Activated CD4-positive, alpha-beta T cell treated with anti-CD3 and anti-CD28 coated beads for 36 hours (primary cell): ENCODE measurements at regions of chr16 and their contacts with region 1.

Region 1: GRCh38 chr16:68022704-68023522 is at the starts of genes DDX28 and DUS2:
- DNase-seq: peak; percentile 95
- ATAC-seq: peak; percentile 89
- H3K4me3 Mint-ChIP-seq: peak within 1 kb of the TSS; percentile 95
- H3K27ac Mint-ChIP-seq: peak within 1 kb of the TSS; percentile 97
- H3K4me1 Mint-ChIP-seq: peaks cover 23% of the 10 kb centered on the region
- H3K27me3 Mint-ChIP-seq: no peaks in the 10 kb centered on the region
- total RNA-seq, gene DDX28: 13.7 to 17.1 TPM
- total RNA-seq, gene DUS2: 29.5 to 33.1 TPM

Region 2: DNA sequence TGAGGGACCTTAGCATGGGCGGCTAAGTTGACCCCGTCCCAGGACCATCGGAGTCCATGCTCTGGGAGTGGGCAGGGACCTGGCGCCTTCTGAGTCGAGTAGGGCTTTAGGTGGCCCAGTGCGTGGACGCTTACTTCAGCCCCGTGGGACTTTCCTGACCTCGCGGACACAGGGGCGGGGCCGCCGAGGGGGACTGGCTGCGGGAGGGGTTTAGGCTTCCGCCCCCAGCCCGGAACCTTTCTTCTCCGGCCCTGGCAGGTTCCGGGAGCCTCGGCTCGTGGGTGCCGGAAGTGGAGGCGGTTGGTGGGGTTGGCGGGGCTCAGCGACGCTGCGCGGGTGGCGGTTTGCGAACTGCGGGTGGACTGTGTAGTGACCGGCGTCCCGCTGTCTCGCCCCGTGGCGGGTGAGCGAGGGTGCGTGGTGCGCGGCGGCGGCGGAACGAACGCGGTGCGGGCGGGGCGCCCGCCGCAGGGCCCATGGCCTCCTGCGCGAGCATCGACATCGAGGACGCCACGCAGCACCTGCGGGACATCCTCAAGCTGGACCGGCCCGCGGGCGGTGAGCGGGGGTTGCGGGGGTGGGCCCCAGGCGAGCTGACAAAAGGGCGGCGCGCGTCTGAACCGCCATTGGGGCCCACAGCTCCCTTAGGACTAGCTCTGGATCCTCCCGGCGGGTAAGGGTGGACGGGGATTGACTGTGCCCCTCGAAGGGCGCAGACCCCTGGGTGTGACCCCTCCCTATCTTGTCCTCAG is 150.0 kb before region 1 on chr16 and contains the start of gene EDC4:
- CTCF ChIA-PET with region 1: no interaction called
- POLR2A ChIA-PET with region 1: no interaction called
- intact Hi-C with region 1: loop called in 1 of 2 experiments (anchors 1 kb)
- DNase-seq: peak; percentile 92
- ATAC-seq: peak; percentile 89
- H3K4me3 Mint-ChIP-seq: peak within 1 kb of the TSS; percentile 77
- H3K27ac Mint-ChIP-seq: peak within 1 kb of the TSS; percentile 92
- H3K4me1 Mint-ChIP-seq: peaks cover 30% of the 10 kb centered on the region
- H3K27me3 Mint-ChIP-seq: no peaks in the 10 kb centered on the region
- total RNA-seq, gene EDC4: 92.8 to 96.9 TPM

Region 3: DNA sequence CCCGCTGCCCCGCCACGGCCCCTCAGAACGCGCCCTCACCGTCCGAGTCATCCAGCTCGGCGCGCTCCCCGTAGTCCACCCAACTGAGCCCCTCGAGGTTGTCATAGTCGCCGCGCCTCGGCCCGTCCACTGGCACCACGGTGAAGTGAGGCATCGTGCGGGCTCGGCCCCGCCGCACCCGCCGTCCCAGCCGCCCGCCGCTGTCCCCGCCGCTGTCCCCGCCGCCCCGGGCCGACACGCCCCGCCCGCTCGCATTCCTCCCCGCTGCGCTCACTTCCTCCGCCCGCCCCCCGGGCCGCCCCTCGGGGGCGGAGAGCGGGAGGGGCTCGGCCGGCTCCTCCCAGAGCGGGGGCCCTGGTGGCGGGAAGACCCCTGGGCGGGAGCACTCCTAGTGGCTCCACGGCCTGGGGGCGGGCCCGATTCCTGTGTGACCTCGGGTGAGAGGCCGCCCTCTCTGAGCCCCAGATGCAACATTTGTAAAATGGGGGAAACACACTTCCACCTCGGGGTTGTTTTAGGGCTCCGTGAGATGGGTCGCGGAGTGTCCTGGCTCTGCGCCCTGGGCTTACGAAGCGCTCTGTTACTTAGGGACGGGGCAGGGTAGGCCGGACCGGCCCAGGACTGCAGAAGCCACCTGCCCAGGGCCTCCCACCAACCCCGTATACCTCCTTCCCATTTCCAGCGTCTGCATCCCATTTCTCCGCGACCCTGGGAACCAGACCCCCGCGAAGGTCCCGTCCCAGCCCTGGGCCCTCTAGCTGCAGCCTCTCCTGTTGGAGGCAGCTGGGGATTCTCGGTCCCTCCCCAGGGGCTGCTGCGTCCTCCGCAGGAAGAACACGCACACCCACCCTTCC is 54.3 kb before region 1 on chr16 and contains the start of gene SLC12A4:
- CTCF ChIA-PET with region 1: no interaction called
- POLR2A ChIA-PET with region 1: no interaction called
- intact Hi-C with region 1: loop called in 1 of 2 experiments (anchors 1 kb)
- DNase-seq: peak; percentile 94
- ATAC-seq: peak; percentile 90
- H3K4me3 Mint-ChIP-seq: peak within 1 kb of the TSS; percentile 84
- H3K27ac Mint-ChIP-seq: peak within 1 kb of the TSS; percentile 80
- H3K4me1 Mint-ChIP-seq: peaks cover 14% of the 10 kb centered on the region
- H3K27me3 Mint-ChIP-seq: no peaks in the 10 kb centered on the region
- total RNA-seq, gene SLC12A4: 21.8 to 25.8 TPM

Region 4: GRCh38 chr16:67999985-68000384 is 22.9 kb before region 1 on chr16:
- CTCF ChIA-PET with region 1: interaction called, 4 read pairs
- POLR2A ChIA-PET with region 1: interaction called, 21 read pairs
- intact Hi-C with region 1: no loop called
- DNase-seq: no peak
- ATAC-seq: peak; percentile 32
- H3K4me3 Mint-ChIP-seq: peak overlapping the region; percentile 77
- H3K27ac Mint-ChIP-seq: peak overlapping the region; percentile 96
- H3K4me1 Mint-ChIP-seq: peaks cover 49% of the 10 kb centered on the region
- H3K27me3 Mint-ChIP-seq: no peaks in the 10 kb centered on the region